CD4-positive, alpha-beta memory T cell (primary cell): ENCODE measurements at regions of chr11 and their contacts with region 1.

Region 1: DNA sequence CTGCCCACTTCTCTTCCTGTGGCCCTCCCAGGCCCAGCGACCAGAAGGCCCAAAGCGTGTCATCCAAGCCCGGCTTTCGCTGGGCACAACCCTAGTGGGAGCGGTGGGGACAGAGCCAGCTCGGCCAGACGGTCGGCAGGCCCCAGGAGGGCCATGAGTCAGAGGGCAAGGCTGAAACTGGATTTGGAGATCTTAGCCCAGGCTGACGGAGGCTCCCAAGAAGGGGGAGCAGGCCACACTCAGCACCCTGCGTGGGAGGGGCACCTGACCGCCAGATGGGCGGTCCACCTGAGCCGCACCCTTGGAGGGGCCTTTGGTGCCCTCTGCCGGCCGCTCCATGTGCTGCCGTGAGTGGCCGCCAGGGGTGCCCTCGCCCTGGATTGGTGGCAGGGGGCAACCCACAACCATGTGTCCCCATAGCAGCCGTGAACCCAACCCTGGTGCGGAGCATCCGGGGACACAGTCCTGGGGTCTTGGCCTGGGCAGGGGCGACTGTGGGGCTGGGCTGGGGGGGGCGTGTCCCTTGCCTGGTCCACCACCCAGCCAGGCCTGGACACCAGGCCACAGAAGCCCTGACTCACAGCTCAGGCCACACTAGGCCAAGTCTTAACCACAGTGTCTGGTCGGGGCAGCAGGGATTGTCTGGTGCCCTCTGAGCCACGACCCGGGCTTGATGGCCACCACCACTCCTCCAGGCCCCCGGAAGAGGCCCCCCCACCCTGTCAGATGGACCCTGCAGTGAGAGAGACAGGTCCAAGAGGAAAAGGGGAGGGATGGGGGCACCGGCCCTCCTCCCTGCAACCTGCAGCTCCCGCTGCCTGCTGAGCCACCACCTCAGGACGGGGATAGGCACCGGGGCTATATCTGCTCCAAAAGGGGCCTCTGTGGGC is 19.2 kb upstream of the TALDO1 start:
- DNase-seq: peak; percentile 71 to 78 (median 75)
- H3K4me3 ChIP-seq: no peak overlapping the region
- H3K4me3 Mint-ChIP-seq: no peak overlapping the region
- H3K27ac ChIP-seq: no peak overlapping the region
- H3K27ac Mint-ChIP-seq: no peak overlapping the region
- H3K4me1 ChIP-seq: peaks cover 26% of the 10 kb centered on the region
- H3K4me1 Mint-ChIP-seq: peaks cover 4 to 13% (median 9%) of the 10 kb centered on the region in 4 donors
- H3K27me3 ChIP-seq: no peaks in the 10 kb centered on the region
- H3K27me3 Mint-ChIP-seq: peaks cover 1 to 2% of the 10 kb centered on the region in 2 donors

Region 2: GRCh38 chr11:560305-561147 is 167.6 kb before region 1 on chr11 and contains the starts of genes LMNTD2 and RASSF7:
- CTCF ChIA-PET with region 1: interaction called, 41 read pairs
- POLR2A ChIA-PET with region 1: interaction called, 40 read pairs
- intact Hi-C with region 1: loop called (anchors 1 kb)
- DNase-seq: peak; percentile 92 to 95 (median 92)
- H3K4me3 ChIP-seq: peak within 1 kb of the TSS; percentile 69 to 75
- H3K4me3 Mint-ChIP-seq: peak within 1 kb of the TSS; percentile 84 to 94 (median 89)
- H3K27ac ChIP-seq: peak within 1 kb of the TSS; percentile 62
- H3K27ac Mint-ChIP-seq: peak within 1 kb of the TSS; percentile 80 to 93 (median 89)
- H3K4me1 ChIP-seq: peaks cover 22% of the 10 kb centered on the region
- H3K4me1 Mint-ChIP-seq: peaks cover 8 to 17% (median 13%) of the 10 kb centered on the region in 4 donors
- H3K27me3 ChIP-seq: no peaks in the 10 kb centered on the region
- H3K27me3 Mint-ChIP-seq: no peaks in the 10 kb centered on the region
- total RNA-seq, gene LMNTD2: 7.0 to 8.1 TPM
- total RNA-seq, gene RASSF7: 52.7 to 55.2 TPM

Region 3: GRCh38 chr11:615504-616319 is 112.4 kb before region 1 on chr11 and contains the start of gene IRF7:
- CTCF ChIA-PET with region 1: no interaction called
- POLR2A ChIA-PET with region 1: interaction called, 13 read pairs
- intact Hi-C with region 1: loop called (anchors 2 kb)
- DNase-seq: peak; percentile 79 to 89 (median 83)
- H3K4me3 ChIP-seq: peak within 1 kb of the TSS; percentile 78 to 80
- H3K4me3 Mint-ChIP-seq: peak within 1 kb of the TSS; percentile 90 to 96 (median 93)
- H3K27ac ChIP-seq: peak within 1 kb of the TSS; percentile 96
- H3K27ac Mint-ChIP-seq: peak within 1 kb of the TSS; percentile 89 to 96 (median 93)
- H3K4me1 ChIP-seq: peaks cover 29% of the 10 kb centered on the region
- H3K4me1 Mint-ChIP-seq: peaks cover 6 to 35% (median 20%) of the 10 kb centered on the region in 4 donors
- H3K27me3 ChIP-seq: no peaks in the 10 kb centered on the region
- H3K27me3 Mint-ChIP-seq: no peaks in the 10 kb centered on the region
- total RNA-seq, gene IRF7: 67.6 to 76.6 TPM

Region 4: DNA sequence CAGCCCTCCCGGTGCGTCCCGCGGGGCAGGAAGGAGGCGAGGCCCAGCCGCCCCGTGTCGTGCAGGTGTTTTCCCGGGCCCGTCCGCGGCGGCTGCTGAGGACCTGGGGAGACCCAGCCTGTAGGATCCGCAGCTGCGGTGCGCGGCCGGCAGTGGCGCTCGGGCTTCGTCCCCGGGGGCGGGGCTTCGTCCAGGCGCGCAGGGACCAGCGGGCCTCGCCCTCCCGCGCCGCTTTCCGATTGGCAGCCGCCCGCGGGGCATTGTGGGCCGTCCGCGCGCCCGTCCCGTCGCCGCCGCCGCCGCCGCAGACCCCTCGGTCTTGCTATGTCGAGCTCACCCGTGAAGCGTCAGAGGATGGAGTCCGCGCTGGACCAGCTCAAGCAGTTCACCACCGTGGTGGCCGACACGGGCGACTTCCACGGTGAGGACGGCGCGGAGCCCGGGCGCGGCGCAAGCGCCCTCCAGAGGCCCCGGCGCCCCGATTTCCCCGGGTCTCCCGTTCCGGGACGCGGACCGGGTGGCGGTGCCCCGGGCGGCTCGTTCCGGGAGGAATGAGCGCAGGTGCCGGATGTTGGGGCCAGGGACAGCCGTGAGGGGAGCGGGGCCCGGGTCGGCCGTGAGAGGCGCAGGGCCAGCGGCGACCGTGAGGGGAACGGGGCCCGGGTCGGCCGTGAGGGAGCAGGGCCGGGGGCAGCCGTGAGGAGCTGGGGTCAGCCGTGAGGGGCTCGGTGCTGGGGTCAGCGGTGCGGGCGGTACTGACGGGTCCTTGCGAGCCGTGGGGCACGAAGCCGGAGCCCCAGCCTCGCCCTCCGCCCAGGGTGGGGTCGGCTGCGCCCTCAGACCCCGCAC is 19.3 kb after region 1 on chr11 and contains the start of gene TALDO1:
- CTCF ChIA-PET with region 1: interaction called, 11 read pairs
- POLR2A ChIA-PET with region 1: interaction called, 30 read pairs
- intact Hi-C with region 1: loop called (anchors 1 kb)
- DNase-seq: peak; percentile 62 to 80 (median 65)
- H3K4me3 ChIP-seq: peak within 1 kb of the TSS; percentile 58 to 87
- H3K4me3 Mint-ChIP-seq: peak within 1 kb of the TSS; percentile 82 to 89 (median 87)
- H3K27ac ChIP-seq: peak within 1 kb of the TSS; percentile 67
- H3K27ac Mint-ChIP-seq: peak within 1 kb of the TSS; percentile 79 to 92 (median 86)
- H3K4me1 ChIP-seq: peaks cover 31% of the 10 kb centered on the region
- H3K4me1 Mint-ChIP-seq: peaks cover 11 to 29% (median 21%) of the 10 kb centered on the region in 4 donors
- H3K27me3 ChIP-seq: no peaks in the 10 kb centered on the region
- H3K27me3 Mint-ChIP-seq: no peaks in the 10 kb centered on the region
- total RNA-seq, gene TALDO1: 80.4 to 90.5 TPM